Calu3 (cell line): ENCODE measurements at regions of chr9 and their contacts with region 1.

Region 1: DNA sequence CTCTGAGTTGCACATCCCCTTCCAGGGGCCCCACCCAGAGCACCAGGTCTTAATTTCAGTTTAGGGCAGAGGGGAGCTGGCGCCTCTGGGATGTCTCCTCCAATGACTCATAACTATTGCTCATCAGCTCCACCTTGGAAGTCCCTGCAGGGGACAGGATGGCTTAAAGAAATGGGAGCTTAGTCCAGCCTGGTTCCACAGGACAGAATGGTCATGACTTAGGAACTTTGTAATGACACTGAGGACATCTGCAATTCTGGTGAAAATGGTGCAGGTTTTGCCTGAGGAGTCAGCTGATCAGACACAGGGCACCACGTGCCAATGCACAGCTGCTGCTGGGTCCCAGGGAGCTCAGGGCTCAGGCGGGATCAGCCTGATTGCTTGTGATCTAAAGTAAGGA is 16.4 kb upstream of the PPP1R26 start:
- DNase-seq: no peak
- H3K4me3 Mint-ChIP-seq: no peak overlapping the region
- H3K27ac Mint-ChIP-seq: no peak overlapping the region
- H3K4me1 Mint-ChIP-seq: no peaks in the 10 kb centered on the region
- H3K27me3 Mint-ChIP-seq: no peaks in the 10 kb centered on the region
- CTCF ChIP-seq: no peak

Region 2: GRCh38 chr9:135300346-135301141 is 162.6 kb before region 1 on chr9:
- CTCF ChIA-PET with region 1: no interaction called
- intact Hi-C with region 1: no loop called
- DNase-seq: no peak
- H3K4me3 Mint-ChIP-seq: no peak overlapping the region
- H3K27ac Mint-ChIP-seq: no peak overlapping the region
- H3K4me1 Mint-ChIP-seq: no peaks in the 10 kb centered on the region
- H3K27me3 Mint-ChIP-seq: peaks cover 81% of the 10 kb centered on the region
- CTCF ChIP-seq: no peak

Region 3: DNA sequence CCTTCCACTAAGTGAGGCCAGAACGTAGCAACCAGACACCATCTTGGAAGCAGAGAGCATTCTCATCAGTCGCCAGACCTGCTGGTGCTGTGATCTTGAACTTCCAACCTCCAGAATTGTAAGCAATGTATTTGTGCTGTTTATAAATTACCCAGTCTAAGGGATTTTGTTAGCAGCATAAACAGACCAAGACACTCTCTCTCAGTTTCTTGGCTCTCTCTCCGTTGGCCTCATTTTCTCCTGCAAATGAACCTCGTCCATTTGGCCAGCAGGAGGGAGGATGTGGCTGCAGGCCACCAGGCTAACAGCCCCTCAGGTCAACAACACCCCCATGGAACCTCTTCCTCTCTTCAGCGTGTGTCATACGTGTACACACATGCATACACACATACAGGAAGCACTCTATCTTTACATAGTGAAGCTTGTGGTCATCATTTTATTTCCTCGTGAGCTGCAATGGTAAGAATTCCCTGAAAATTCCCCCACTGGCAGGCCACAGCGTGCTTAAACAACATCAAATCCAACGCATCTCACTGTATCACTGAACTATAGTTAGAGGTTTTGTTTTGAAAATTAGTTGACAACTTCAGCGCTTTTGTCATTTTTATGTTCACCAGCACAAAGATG is 46.4 kb before region 1 on chr9:
- CTCF ChIA-PET with region 1: no interaction called
- intact Hi-C with region 1: no loop called
- DNase-seq: no peak
- H3K4me3 Mint-ChIP-seq: no peak overlapping the region
- H3K27ac Mint-ChIP-seq: no peak overlapping the region
- H3K4me1 Mint-ChIP-seq: no peaks in the 10 kb centered on the region
- H3K27me3 Mint-ChIP-seq: peaks cover 28% of the 10 kb centered on the region
- CTCF ChIP-seq: no peak

Region 4: GRCh38 chr9:135526675-135527571 is 63.8 kb after region 1 on chr9:
- CTCF ChIA-PET with region 1: interaction called, 11 read pairs
- intact Hi-C with region 1: no loop called
- DNase-seq: no peak
- H3K4me3 Mint-ChIP-seq: no peak overlapping the region
- H3K27ac Mint-ChIP-seq: no peak overlapping the region
- H3K4me1 Mint-ChIP-seq: no peaks in the 10 kb centered on the region
- H3K27me3 Mint-ChIP-seq: peaks cover 25% of the 10 kb centered on the region
- CTCF ChIP-seq: no peak